MCF 10A (cell line): ENCODE measurements at regions of chr1 and their contacts with region 1.

Region 1: GRCh38 chr1:160031365-160032164 is at the start of gene PIGM:
- DNase-seq: peak; percentile 99
- H3K4me3 Mint-ChIP-seq: peak within 1 kb of the TSS; percentile 80
- H3K27ac Mint-ChIP-seq: peak within 1 kb of the TSS; percentile 60
- H3K4me1 Mint-ChIP-seq: peaks cover 24% of the 10 kb centered on the region
- H3K27me3 Mint-ChIP-seq: no peaks in the 10 kb centered on the region
- CTCF ChIP-seq: no peak
- total RNA-seq, gene PIGM: 7.7 and 10.1 TPM in 2 replicates

Region 2: GRCh38 chr1:159141584-159142390 is 889.8 kb before region 1 on chr1:
- CTCF ChIA-PET with region 1: no interaction called
- POLR2A ChIA-PET with region 1: no interaction called
- intact Hi-C with region 1: loop called (anchors 10 kb)
- DNase-seq: peak; percentile 72
- H3K4me3 Mint-ChIP-seq: no peak overlapping the region
- H3K27ac Mint-ChIP-seq: no peak overlapping the region
- H3K4me1 Mint-ChIP-seq: no peaks in the 10 kb centered on the region
- H3K27me3 Mint-ChIP-seq: no peaks in the 10 kb centered on the region
- CTCF ChIP-seq: no peak

Region 3: GRCh38 chr1:159936273-159936904 is 95.2 kb before region 1 on chr1:
- CTCF ChIA-PET with region 1: interaction called, 6 read pairs
- POLR2A ChIA-PET with region 1: interaction called, 12 read pairs
- intact Hi-C with region 1: no loop called
- DNase-seq: peak; percentile 85
- H3K4me3 Mint-ChIP-seq: no peak overlapping the region
- H3K27ac Mint-ChIP-seq: no peak overlapping the region
- H3K4me1 Mint-ChIP-seq: peaks cover 22% of the 10 kb centered on the region
- H3K27me3 Mint-ChIP-seq: no peaks in the 10 kb centered on the region
- CTCF ChIP-seq: peak; percentile 100

Region 4: GRCh38 chr1:160018900-160019299 is 12.7 kb before region 1 on chr1:
- CTCF ChIA-PET with region 1: interaction called, 9 read pairs
- POLR2A ChIA-PET with region 1: interaction called, 52 read pairs
- intact Hi-C with region 1: no loop called
- DNase-seq: peak; percentile 67
- H3K4me3 Mint-ChIP-seq: no peak overlapping the region
- H3K27ac Mint-ChIP-seq: no peak overlapping the region
- H3K4me1 Mint-ChIP-seq: peaks cover 27% of the 10 kb centered on the region
- H3K27me3 Mint-ChIP-seq: no peaks in the 10 kb centered on the region
- CTCF ChIP-seq: no peak

Region 5: GRCh38 chr1:160064164-160064563 is 32.6 kb after region 1 on chr1:
- CTCF ChIA-PET with region 1: interaction called, 1,546 read pairs
- POLR2A ChIA-PET with region 1: interaction called, 12 read pairs
- intact Hi-C with region 1: no loop called
- DNase-seq: no peak
- H3K4me3 Mint-ChIP-seq: no peak overlapping the region
- H3K27ac Mint-ChIP-seq: no peak overlapping the region
- H3K4me1 Mint-ChIP-seq: peaks cover 8% of the 10 kb centered on the region
- H3K27me3 Mint-ChIP-seq: peaks cover 44% of the 10 kb centered on the region
- CTCF ChIP-seq: no peak

Region 6: GRCh38 chr1:160117709-160118183 is 86.2 kb after region 1 on chr1:
- CTCF ChIA-PET with region 1: no interaction called
- POLR2A ChIA-PET with region 1: interaction called, 10 read pairs
- intact Hi-C with region 1: no loop called
- DNase-seq: peak; percentile 30
- H3K4me3 Mint-ChIP-seq: no peak overlapping the region
- H3K27ac Mint-ChIP-seq: no peak overlapping the region
- H3K4me1 Mint-ChIP-seq: peaks cover 8% of the 10 kb centered on the region
- H3K27me3 Mint-ChIP-seq: no peaks in the 10 kb centered on the region
- CTCF ChIP-seq: no peak

Region 7: GRCh38 chr1:160315359-160315758 is 283.8 kb after region 1 on chr1:
- CTCF ChIA-PET with region 1: no interaction called
- POLR2A ChIA-PET with region 1: no interaction called
- intact Hi-C with region 1: no loop called
- DNase-seq: no peak
- H3K4me3 Mint-ChIP-seq: no peak overlapping the region
- H3K27ac Mint-ChIP-seq: no peak overlapping the region
- H3K4me1 Mint-ChIP-seq: peaks cover 15% of the 10 kb centered on the region
- H3K27me3 Mint-ChIP-seq: no peaks in the 10 kb centered on the region
- CTCF ChIP-seq: no peak